GM10248 (cell line): ENCODE measurements at regions of chr16 and their contacts with region 1.

Region 1: GRCh38 chr16:75043175-75043895 is 44.5 kb downstream of the ZNRF1 start:
- DNase-seq: peak; percentile 30
- CTCF ChIP-seq: no peak

Region 2: GRCh38 chr16:75011634-75012307 is 31.6 kb before region 1 on chr16:
- CTCF ChIA-PET with region 1: interaction called, 12 read pairs
- POLR2A ChIA-PET with region 1: no interaction called
- DNase-seq: peak; percentile 58
- CTCF ChIP-seq: no peak

Region 3: DNA sequence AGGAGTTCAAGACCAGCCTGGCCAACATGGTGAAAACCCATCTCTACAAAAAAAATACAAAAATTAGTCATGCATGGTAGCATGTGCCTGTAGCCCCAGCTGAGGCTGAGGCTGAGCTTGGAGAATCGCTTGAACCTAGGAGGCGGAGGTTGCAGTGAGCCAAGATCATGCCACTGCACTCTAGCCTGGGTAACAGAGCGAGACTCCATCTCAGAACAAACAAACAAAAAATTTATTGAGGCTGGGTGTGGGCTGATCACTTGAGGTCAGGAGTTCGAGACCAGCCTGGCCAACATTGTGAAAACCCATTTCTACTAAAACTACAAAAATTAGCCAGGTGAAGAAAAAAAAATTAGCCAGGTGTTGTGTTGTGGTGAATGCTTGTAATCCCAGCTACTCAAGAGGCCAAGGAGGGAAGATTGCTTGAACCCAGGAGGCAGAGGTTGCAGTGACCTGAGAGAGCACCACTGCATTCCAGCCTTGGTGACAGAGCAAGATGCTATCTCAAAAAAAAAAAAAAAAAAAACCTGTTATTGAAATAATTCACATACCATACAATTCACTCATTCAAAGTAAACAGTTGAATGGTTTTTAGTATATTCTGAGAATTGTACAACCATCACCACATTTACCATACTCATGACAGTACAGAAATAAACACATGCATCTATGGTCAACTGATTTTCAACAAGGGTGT is 13.6 kb before region 1 on chr16:
- CTCF ChIA-PET with region 1: no interaction called
- POLR2A ChIA-PET with region 1: no interaction called
- DNase-seq: no peak
- CTCF ChIP-seq: no peak

Region 4: GRCh38 chr16:75062135-75062975 is 19.0 kb after region 1 on chr16:
- CTCF ChIA-PET with region 1: interaction called, 13 read pairs
- POLR2A ChIA-PET with region 1: no interaction called
- DNase-seq: no peak
- CTCF ChIP-seq: no peak

Region 5: DNA sequence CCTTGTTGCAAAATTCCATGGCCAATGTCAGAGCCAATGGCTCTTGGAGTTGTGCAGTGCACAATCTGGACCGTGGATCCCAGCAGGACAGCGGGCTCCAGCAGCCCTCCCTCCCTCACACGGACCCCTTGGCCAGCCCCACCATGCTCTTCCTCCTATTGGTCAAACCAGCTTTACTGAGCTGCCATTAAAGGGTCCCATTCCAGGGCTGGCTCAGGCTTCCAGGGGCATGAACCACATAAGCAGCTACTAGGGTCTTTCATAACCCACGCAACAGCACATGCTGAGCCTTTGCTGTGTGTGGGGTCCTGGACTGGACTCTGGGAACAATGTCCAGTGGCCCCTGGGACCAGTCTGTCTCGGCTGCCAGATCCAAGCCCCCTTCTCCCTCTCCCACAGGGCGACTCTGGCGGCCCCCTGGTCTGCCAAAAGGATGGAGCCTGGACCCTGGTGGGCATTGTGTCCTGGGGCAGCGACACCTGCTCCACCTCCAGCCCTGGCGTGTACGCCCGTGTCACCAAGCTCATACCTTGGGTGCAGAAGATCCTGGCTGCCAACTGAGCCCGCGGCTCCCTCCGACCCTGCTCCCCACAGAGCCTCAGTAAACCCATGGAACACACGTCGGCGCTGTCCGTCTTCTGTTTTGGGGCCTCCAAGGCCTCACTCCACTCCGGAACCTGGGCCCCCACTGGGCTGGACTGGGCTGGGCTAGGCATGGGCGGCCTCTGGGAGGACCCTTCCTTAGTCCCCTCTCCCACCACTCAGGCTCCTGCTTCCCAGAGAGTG is 181.2 kb after region 1 on chr16:
- CTCF ChIA-PET with region 1: no interaction called
- POLR2A ChIA-PET with region 1: no interaction called
- DNase-seq: peak; percentile 30
- CTCF ChIP-seq: no peak